CD8-positive, alpha-beta memory T cell (primary cell): ENCODE measurements at regions of chr18 and their contacts with region 1.

Region 1: DNA sequence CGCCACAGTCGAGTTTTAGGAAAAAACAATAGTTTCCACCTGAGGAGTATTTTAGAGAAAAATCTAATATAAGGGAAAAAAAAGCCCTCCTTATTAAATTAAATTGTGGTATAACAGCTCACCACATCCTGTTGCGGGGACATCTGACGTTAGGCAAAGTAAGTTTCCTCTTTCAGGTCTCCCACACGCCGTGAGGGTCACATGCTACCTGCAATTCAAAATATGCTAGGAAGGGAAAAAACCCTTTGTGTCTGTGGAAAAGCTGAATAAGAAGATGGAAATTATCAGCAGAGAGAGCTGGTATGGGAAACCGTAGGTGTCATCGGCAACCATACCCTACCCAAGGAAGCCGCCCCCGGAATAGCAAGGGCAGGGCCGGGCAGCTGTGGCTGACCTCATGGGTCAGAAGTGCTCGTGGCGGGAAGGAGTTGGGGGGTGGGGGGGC is 128.0 kb downstream of the NFATC1 start:
- DNase-seq: peak; percentile 59 to 90 (median 82)
- H3K4me3 ChIP-seq: peak overlapping the region; percentile 75
- H3K4me3 Mint-ChIP-seq: peak overlapping the region; percentile 62 to 93 (median 85)
- H3K27ac ChIP-seq: peak overlapping the region; percentile 43
- H3K27ac Mint-ChIP-seq: peak overlapping the region; percentile 92 to 98 (median 96)
- H3K4me1 ChIP-seq: peaks cover 61% of the 10 kb centered on the region
- H3K4me1 Mint-ChIP-seq: peaks cover 45 to 70% (median 57%) of the 10 kb centered on the region in 3 donors
- H3K27me3 ChIP-seq: no peaks in the 10 kb centered on the region
- H3K27me3 Mint-ChIP-seq: no peaks in the 10 kb centered on the region

Region 2: DNA sequence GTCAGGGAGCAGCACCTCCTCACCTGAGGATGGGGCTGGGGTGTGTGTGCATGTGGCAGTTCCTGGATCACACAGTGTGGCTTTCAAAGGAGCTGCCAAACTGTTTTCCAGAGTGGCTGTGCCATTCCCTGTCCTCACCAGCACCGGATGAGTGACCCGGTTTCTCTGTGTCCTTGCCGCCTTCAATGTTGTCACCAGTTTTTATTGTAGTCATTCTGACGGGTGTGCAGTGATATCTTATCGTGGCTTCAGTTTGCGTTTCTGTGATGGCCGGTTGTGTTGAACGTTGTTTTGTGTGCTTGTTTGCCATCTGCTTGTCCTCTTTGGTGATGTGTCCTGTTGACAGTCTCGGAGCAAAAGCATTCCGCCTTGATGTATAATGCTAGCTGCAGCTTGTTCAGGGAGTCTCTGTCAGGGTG is 345.6 kb before region 1 on chr18:
- CTCF ChIA-PET with region 1: no interaction called
- POLR2A ChIA-PET with region 1: no interaction called
- DNase-seq: no peak
- H3K4me3 ChIP-seq: no peak overlapping the region
- H3K4me3 Mint-ChIP-seq: no peak overlapping the region
- H3K27ac ChIP-seq: no peak overlapping the region
- H3K27ac Mint-ChIP-seq: peak overlapping the region in 3 of 8 donors; percentile 6 to 15 (median 7)
- H3K4me1 ChIP-seq: no peaks in the 10 kb centered on the region
- H3K4me1 Mint-ChIP-seq: peaks cover 19 to 32% (median 27%) of the 10 kb centered on the region in 3 donors
- H3K27me3 ChIP-seq: no peaks in the 10 kb centered on the region
- H3K27me3 Mint-ChIP-seq: no peaks in the 10 kb centered on the region

Region 3: DNA sequence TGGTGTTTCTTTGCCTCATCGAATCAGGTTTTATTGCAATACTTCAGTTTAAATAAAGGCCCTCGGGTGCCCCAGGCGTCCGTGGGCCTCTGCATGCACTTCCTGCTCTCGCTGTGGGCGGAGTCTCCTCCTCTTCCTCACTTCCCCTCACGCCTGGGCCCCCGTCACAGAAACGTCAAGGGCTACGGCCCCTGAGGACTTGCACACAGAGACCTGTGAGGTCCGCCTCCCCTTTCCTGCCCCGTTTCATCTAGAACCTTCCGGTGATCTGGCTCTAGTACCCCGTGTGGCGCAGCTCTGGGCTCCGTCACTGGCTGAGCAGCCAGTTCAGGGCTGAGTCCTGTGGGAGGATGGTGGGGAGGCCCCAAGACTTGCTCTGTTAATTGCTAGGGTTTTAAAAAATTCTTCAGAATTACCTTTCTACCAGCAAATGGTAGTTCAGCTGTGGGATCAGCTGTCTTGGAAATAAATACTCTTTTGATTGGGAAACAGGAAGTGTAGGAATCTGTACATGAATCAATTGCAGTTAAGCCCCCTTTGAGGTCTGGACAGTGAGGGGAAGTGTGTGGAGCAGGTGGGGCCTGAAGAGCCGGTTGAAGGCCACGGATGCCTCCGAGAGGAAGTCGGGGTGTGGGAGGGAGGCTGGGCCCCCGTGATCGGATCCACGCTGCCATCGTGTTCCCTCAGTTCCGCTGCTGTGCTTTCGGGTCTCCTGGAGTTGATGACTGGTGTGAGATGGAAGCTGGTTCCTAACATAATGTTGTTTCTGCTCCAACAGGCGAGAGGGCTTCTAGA is 117.8 kb before region 1 on chr18:
- CTCF ChIA-PET with region 1: interaction called, 14 read pairs
- POLR2A ChIA-PET with region 1: interaction called, 6 read pairs
- DNase-seq: peak; percentile 81 to 94 (median 90)
- H3K4me3 ChIP-seq: peak overlapping the region; percentile 59
- H3K4me3 Mint-ChIP-seq: peak overlapping the region; percentile 59 to 89 (median 79)
- H3K27ac ChIP-seq: peak overlapping the region; percentile 83
- H3K27ac Mint-ChIP-seq: peak overlapping the region; percentile 88 to 99 (median 96)
- H3K4me1 ChIP-seq: peaks cover 60% of the 10 kb centered on the region
- H3K4me1 Mint-ChIP-seq: peaks cover 46 to 58% (median 57%) of the 10 kb centered on the region in 3 donors
- H3K27me3 ChIP-seq: no peaks in the 10 kb centered on the region
- H3K27me3 Mint-ChIP-seq: no peaks in the 10 kb centered on the region